ENCODE measurements at regions of chr11 and their contacts with region 1.

Region 1: GRCh38 chr11:134676516-134677287 is 264.7 kb upstream of the B3GAT1 start:
- DNase-seq: no peak
- ATAC-seq: no peak
- H3K4me3 ChIP-seq: no peak overlapping the region
- H3K27ac ChIP-seq: no peak overlapping the region
- H3K4me1 ChIP-seq: no peaks in the 10 kb centered on the region
- H3K27me3 ChIP-seq: peaks cover 0 to 2% (median 0%) of the 10 kb centered on the region in 3 donors
- CTCF ChIP-seq: no peak

Region 2: GRCh38 chr11:134753771-134754500 is 77.2 kb after region 1 on chr11:
- intact Hi-C with region 1: loop called in 1 of 2 experiments (anchors 10 kb)
- DNase-seq: no peak
- ATAC-seq: no peak
- H3K4me3 ChIP-seq: no peak overlapping the region
- H3K27ac ChIP-seq: no peak overlapping the region
- H3K4me1 ChIP-seq: no peaks in the 10 kb centered on the region
- H3K27me3 ChIP-seq: peaks cover 0 to 3% (median 0%) of the 10 kb centered on the region in 3 donors
- CTCF ChIP-seq: no peak

Measured in psoas muscle (tissue), 8 donors.